ENCODE measurements at regions of chr6 and their contacts with region 1.

Region 1: DNA sequence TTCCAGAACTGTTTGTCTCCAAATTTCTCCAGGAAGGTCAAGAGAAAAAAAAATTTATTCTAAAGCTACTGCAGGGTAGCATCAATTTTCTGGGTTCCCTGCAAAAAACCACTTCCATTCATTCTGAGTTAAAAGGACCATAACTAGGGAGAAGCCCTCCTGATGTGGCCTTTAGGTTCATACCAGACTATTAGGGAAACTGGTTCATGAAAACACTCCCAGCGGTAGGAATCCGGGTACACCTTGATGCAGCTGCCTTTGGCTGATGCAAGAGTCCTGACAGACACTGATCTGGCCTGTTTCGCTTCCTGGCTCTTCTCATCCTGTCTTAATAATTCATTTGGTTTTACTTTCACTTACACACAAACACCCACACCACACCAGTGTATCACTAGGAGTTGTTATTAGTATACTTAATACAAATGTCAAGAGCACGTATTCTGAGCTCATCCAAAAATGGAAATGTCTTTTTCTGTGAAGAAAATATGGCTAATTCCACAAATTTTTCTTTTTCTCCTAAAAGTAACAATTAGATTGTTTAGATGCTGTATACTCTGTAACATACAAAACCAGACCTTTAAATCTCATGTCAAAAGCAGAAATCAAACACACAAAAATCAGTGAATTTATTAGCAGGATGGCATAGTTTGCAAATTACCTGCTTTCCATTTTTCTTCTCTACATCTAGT is 38.4 kb upstream of the ARHGAP18 start:
- DNase-seq: peak; percentile 70
- ATAC-seq: peak; percentile 39; the same call in 1 of the 2 replicates
- H3K4me3 ChIP-seq: peak overlapping the region; percentile 57; the same call in 1 of the 2 replicates
- H3K27ac ChIP-seq: peak overlapping the region; percentile 92
- H3K4me1 ChIP-seq: peaks cover 55% of the 10 kb centered on the region
- H3K27me3 ChIP-seq: no peaks in the 10 kb centered on the region
- CTCF ChIP-seq: peak; percentile 15; the same call in 1 of the 2 replicates

Region 2: DNA sequence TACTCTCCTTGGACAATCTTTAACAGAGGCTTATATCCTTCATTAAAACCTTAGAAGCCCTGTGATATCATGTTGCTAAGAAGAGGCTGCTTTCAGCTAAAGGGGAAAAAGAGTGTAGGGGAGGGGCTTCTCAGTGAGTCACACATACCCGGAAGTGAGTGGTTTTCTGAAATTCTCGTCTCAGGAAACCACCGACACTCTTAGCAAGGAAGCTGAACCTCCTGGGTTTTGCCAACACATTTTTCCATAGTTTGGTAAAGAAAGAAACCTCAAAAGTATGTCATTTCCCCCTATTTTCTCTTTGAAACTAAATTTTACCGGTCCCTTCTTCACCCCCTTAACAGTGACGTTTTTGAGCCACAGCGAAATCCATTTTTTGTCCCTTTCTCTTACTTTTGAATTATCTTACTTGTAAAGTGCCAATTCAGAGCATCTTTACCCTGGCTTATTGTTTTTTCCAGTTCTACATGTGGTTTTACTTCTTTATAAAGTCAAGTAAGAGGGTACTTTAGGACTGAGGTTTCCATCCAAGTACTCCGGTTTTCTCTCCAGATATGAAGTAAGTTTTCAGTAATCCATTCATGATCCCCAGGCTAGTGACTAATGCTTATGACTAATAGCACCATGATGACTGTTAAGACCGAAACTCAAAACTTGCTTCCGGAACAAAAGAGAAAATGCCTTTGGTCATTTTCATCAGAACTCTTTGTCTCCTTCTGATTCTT is 257.7 kb before region 1 on chr6:
- CTCF ChIA-PET with region 1: no interaction called
- POLR2A ChIA-PET with region 1: no interaction called
- intact Hi-C with region 1: loop called (anchors 2 kb)
- DNase-seq: peak; percentile 95
- ATAC-seq: peak; percentile 82
- H3K4me3 ChIP-seq: peak overlapping the region; percentile 68
- H3K27ac ChIP-seq: peak overlapping the region; percentile 100
- H3K4me1 ChIP-seq: peaks cover 56% of the 10 kb centered on the region
- H3K27me3 ChIP-seq: no peaks in the 10 kb centered on the region
- CTCF ChIP-seq: no peak

Region 3: DNA sequence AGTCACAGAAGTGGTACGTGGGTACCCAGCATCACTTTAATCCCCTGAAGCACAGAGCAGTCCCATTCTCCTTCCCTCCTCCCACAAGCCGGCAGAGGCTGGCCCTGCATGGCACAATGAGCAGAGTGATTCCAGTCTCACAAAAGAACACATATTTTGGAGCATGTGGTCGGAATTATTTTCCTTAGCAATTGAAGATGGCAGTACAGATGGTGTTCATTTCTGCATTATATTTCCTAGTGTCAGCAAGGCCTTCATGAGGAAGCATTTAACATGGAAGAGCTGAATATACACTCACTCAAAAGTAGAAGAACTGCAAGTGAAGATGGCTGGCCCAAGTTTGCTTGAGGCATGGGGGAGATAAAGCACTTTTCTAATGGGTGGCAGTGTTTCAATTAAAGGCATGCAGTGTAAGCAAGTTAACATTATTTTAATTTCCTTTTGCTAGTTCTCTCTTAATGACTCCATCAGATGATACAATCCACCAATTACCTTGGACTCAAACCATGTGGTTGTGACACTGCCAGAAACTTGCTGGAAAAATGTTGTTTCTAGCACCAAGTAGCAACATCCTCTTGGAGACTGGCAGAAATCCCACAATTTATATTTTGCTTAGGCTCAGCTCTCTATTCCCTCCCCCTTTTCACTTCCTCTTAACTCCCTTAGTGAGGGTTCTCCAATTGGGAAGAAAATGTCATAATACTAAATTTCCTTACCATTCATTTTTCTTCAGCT is 112.8 kb before region 1 on chr6:
- CTCF ChIA-PET with region 1: no interaction called
- POLR2A ChIA-PET with region 1: no interaction called
- intact Hi-C with region 1: no loop called
- DNase-seq: no peak
- ATAC-seq: no peak
- H3K4me3 ChIP-seq: no peak overlapping the region
- H3K27ac ChIP-seq: no peak overlapping the region
- H3K4me1 ChIP-seq: peaks cover 13% of the 10 kb centered on the region
- H3K27me3 ChIP-seq: no peaks in the 10 kb centered on the region
- CTCF ChIP-seq: no peak

Region 4: GRCh38 chr6:129695373-129696027 is 52.9 kb before region 1 on chr6:
- CTCF ChIA-PET with region 1: no interaction called
- POLR2A ChIA-PET with region 1: no interaction called
- intact Hi-C with region 1: no loop called
- DNase-seq: no peak
- ATAC-seq: peak; percentile 46
- H3K4me3 ChIP-seq: no peak overlapping the region
- H3K27ac ChIP-seq: no peak overlapping the region
- H3K4me1 ChIP-seq: no peaks in the 10 kb centered on the region
- H3K27me3 ChIP-seq: no peaks in the 10 kb centered on the region
- CTCF ChIP-seq: no peak

Region 5: DNA sequence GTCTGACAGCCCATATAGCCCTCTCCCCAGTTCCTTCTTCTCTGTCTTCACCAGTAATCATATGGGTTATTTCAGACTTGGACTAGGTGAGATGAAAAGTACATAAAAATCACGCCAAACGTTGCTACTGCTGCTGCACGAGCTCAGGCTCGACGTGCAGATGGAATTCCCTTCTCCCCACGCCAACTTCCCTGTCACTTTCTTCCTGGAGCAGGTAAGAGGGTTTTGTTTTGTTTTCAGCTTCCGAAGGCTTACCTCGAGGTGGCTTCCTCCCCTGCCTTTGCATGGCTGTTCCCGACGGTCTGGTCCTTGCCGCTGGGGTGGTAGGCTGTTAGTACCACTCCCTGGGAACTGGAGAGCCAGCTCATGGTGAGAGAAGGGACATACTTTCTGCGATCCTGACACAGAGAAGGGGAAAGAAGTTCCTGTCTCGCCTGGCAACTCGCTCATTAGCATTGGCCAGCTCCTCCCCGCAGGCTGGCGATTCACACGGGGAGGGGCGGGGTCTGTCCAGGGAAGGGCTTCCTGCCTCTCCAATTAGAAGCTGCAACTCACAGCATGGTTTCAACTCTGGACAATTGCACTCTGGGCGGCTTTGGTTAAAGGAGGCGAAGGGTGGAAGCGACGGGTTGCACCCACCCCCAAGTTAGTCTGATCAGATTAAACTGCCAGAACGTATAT is 38.4 kb before region 1 on chr6 and contains the start of gene ARHGAP18:
- CTCF ChIA-PET with region 1: no interaction called
- POLR2A ChIA-PET with region 1: no interaction called
- intact Hi-C with region 1: loop called (anchors 2 kb)
- DNase-seq: peak; percentile 92
- ATAC-seq: peak; percentile 98
- H3K4me3 ChIP-seq: peak within 1 kb of the TSS; percentile 73
- H3K27ac ChIP-seq: peak within 1 kb of the TSS; percentile 55
- H3K4me1 ChIP-seq: peaks cover 17% of the 10 kb centered on the region; the same call in 1 of the 2 replicates
- H3K27me3 ChIP-seq: no peaks in the 10 kb centered on the region
- CTCF ChIP-seq: no peak
- total RNA-seq, gene ARHGAP18: 4.1 and 5.9 TPM in 2 replicates

Region 6: DNA sequence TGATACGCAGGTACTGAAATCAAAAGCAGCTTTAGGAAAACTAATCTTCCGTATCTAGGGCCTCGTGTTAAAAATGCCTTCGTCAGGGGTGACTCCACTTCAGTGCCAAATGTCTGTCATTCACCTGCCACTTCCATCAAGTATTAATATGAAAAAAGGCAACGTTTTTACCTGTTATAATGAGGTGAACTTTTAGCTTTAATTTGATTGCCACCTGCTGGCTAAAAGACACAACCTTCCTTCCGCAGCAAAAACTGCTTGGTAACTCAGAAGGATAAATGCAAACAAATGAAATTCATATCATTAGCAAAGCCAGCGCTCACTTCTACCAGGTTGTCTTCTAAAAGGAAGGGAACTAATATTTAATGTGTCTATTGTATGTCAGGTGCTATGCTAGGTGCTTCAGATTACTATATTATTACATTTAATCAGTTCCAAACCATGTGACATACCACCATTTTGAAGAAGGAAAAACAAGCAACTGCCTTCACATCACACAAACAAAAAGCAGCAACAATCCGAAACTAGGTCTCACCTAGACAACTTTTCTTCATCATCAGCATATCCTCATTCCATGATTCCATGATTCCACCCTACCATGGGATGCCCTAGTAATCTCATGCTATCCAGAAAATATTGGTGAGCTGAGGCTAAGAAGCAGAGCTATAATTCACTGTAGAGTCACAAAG is 17.7 kb before region 1 on chr6:
- CTCF ChIA-PET with region 1: interaction called, 6 read pairs
- POLR2A ChIA-PET with region 1: no interaction called
- intact Hi-C with region 1: loop called (anchors 1 kb)
- DNase-seq: peak; percentile 61
- ATAC-seq: peak; percentile 45; the same call in 1 of the 2 replicates
- H3K4me3 ChIP-seq: no peak overlapping the region
- H3K27ac ChIP-seq: no peak overlapping the region
- H3K4me1 ChIP-seq: peaks cover 4% of the 10 kb centered on the region; the same call in 1 of the 2 replicates
- H3K27me3 ChIP-seq: no peaks in the 10 kb centered on the region
- CTCF ChIP-seq: peak; percentile 77

Region 7: GRCh38 chr6:129818251-129818650 is 69.9 kb after region 1 on chr6:
- CTCF ChIA-PET with region 1: no interaction called
- POLR2A ChIA-PET with region 1: no interaction called
- intact Hi-C with region 1: no loop called
- DNase-seq: no peak
- ATAC-seq: no peak
- H3K4me3 ChIP-seq: no peak overlapping the region
- H3K27ac ChIP-seq: no peak overlapping the region
- H3K4me1 ChIP-seq: no peaks in the 10 kb centered on the region
- H3K27me3 ChIP-seq: no peaks in the 10 kb centered on the region
- CTCF ChIP-seq: no peak

Region 8: GRCh38 chr6:129865013-129865412 is 116.7 kb after region 1 on chr6:
- CTCF ChIA-PET with region 1: no interaction called
- POLR2A ChIA-PET with region 1: no interaction called
- intact Hi-C with region 1: no loop called
- DNase-seq: no peak
- ATAC-seq: no peak
- H3K4me3 ChIP-seq: no peak overlapping the region
- H3K27ac ChIP-seq: no peak overlapping the region
- H3K4me1 ChIP-seq: peaks cover 34% of the 10 kb centered on the region
- H3K27me3 ChIP-seq: no peaks in the 10 kb centered on the region
- CTCF ChIP-seq: no peak

Region 9: DNA sequence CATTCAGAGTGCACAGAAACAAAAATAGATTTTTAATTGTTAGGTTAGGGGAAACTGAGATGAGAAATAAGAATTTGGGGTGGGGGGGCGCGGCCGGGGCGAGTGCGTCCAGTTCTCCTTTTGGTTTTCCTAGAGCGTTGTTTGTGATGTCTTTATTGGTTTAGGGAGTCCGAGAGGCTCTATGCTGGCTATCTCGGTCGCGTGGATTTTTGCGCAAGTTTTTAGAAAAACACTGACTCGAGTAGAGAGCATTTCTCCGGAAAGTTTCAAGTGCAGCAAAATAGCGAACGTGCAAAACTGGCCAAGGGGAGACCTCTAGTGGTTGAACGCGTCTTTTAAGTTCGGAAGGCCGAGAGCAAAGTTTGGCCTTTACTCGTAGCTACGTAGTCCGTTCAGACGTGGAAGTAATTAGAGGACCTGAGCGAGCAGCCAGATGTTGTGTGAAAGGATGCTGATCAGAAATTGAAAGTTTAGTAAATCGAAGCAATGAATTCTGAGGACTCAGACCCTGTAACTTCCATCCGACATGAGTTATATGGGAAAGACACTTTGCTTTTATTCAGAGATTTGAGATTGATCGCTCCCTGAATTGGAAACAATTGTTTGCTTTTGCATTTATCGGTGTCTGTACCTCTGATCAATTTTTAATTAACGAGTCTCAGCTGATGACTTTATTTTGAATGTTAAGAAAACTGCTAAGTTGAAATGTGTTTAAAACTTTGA is 272.7 kb after region 1 on chr6:
- CTCF ChIA-PET with region 1: no interaction called
- POLR2A ChIA-PET with region 1: no interaction called
- intact Hi-C with region 1: loop called (anchors 2 kb)
- DNase-seq: peak; percentile 85
- ATAC-seq: peak; percentile 54
- H3K4me3 ChIP-seq: peak overlapping the region; percentile 75
- H3K27ac ChIP-seq: no peak overlapping the region
- H3K4me1 ChIP-seq: no peaks in the 10 kb centered on the region; the same call in 1 of the 2 replicates
- H3K27me3 ChIP-seq: no peaks in the 10 kb centered on the region
- CTCF ChIP-seq: peak; percentile 77

Measured in PC-3 (cell line).